AG04450 (cell line): ENCODE measurements at regions of chr9 and their contacts with region 1.

Region 1: GRCh38 chr9:130707225-130707976 is 13.8 kb downstream of the EXOSC2 start:
- DNase-seq: peak; percentile 54
- H3K4me3 ChIP-seq: no peak overlapping the region
- H3K27ac ChIP-seq: no peak overlapping the region
- H3K27me3 ChIP-seq: no peaks in the 10 kb centered on the region
- CTCF ChIP-seq: peak; percentile 72

Region 2: GRCh38 chr9:130570200-130570599 is 137.2 kb before region 1 on chr9:
- CTCF ChIA-PET with region 1: interaction called, 11 read pairs
- POLR2A ChIA-PET with region 1: no interaction called
- DNase-seq: no peak
- H3K4me3 ChIP-seq: no peak overlapping the region
- H3K27ac ChIP-seq: no peak overlapping the region
- H3K27me3 ChIP-seq: no peaks in the 10 kb centered on the region
- CTCF ChIP-seq: no peak